Breast epithelium (tissue), 4 donors: ENCODE measurements at regions of chr15 and their contacts with region 1.

Region 1: DNA sequence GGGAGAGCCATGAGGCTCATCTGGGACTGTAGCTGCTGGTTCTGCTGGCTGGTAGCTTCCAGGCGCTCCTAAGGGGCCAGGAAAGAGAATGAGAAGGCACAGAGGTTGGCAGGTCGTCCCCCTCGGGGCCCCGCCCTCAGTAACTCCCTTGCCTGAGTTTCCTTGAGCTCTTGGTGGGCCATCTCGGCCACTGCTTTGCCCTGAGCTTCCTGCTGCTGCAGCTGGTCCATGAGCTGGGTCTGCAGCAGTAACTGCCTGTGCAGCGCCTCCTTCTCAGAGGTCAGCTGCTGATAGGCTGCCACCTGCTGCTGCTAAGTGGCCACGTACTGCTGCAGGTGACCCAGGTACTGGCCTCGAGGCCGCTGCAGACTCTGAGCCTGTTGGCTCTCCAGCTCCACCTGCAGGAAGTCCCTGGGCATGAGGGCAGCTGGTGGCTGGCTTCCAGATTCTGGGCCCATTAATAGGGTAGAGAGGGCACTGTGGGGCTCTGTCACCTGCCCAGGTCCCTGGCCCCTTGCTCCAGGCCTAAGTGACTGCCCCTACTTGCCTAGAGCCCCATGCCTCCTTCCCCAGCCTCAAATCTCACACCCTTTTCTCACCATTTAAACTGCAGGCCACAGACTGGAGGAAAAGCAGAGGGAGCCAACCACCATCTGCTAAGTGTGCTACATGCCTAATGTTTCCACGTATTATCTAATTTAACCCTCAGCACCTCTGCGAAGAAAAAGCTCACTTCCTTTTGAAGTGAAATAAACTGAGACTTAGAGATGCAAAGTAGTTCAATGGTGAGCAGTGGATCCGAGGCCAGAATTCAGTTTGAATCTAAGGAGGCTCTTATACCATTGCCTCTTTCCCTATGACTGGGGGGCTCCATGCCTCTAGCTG is 10.8 kb upstream of the VPS33B start:
- DNase-seq: peak; percentile 25 to 64
- H3K4me3 ChIP-seq: no peak overlapping the region
- H3K27ac ChIP-seq: no peak overlapping the region
- H3K4me1 ChIP-seq: no peaks in the 10 kb centered on the region
- H3K27me3 ChIP-seq: no peaks in the 10 kb centered on the region
- CTCF ChIP-seq: peak in 2 of 3 donors; percentile 56 to 58
- POLR2A ChIP-seq: no peak

Region 2: DNA sequence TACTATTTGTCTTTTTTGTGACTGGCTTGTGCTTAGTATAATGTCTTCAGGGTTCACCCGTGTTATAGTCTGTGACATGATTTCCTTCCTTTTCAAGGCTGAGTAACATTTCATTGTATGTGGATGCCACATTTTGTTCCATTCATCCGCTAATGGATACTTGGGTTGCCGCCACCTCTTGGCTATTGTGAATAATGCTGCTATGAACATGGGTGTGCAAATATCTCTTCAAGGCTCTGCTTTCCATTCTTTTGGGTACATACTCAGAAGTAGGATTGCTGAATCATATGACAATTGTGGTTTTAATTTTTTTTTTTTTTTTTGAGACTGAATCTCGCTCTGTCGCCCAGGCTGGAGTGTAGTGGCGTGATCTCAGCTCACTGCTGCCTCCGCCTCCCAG is 488.1 kb before region 1 on chr15:
- intact Hi-C with region 1: loop called (anchors 10 kb)
- DNase-seq: no peak
- H3K4me3 ChIP-seq: no peak overlapping the region
- H3K27ac ChIP-seq: no peak overlapping the region
- H3K4me1 ChIP-seq: no peaks in the 10 kb centered on the region
- H3K27me3 ChIP-seq: no peaks in the 10 kb centered on the region
- CTCF ChIP-seq: no peak
- POLR2A ChIP-seq: no peak

Region 3: GRCh38 chr15:90982135-90982534 is 51.0 kb before region 1 on chr15:
- intact Hi-C with region 1: no loop called
- DNase-seq: no peak
- H3K4me3 ChIP-seq: no peak overlapping the region
- H3K27ac ChIP-seq: no peak overlapping the region
- H3K4me1 ChIP-seq: no peaks in the 10 kb centered on the region
- H3K27me3 ChIP-seq: no peaks in the 10 kb centered on the region
- CTCF ChIP-seq: no peak
- POLR2A ChIP-seq: no peak